Ascending aorta (tissue), 2 donors: ENCODE measurements at regions of chr18 and their contacts with region 1.

Region 1: DNA sequence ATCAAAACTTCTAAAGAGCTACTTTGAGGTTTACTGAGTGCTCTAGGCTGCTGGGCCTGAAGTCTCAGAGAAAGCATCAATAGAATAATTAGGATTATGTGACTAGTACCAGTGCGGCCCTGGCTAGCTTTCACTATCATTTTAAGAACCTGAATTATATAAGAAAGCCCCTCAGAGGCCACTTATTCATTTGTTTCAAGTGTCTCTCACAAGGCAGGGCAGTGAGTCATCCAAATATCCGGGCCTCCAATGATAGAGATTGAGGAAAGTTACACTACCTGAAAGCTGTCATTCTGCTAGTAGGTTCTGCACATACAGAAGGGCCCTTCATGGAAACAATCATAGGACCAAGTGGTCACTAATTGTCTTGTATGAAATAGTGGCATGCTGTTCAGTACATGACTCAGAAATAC is 193.1 kb downstream of the L3MBTL4 start:
- DNase-seq: no peak
- H3K4me3 ChIP-seq: no peak overlapping the region
- H3K27ac ChIP-seq: no peak overlapping the region
- H3K4me1 ChIP-seq: no peaks in the 10 kb centered on the region
- H3K27me3 ChIP-seq: no peaks in the 10 kb centered on the region
- CTCF ChIP-seq: no peak

Region 2: GRCh38 chr18:5975111-5976002 is 246.3 kb before region 1 on chr18:
- intact Hi-C with region 1: no loop called
- DNase-seq: no peak
- H3K4me3 ChIP-seq: no peak overlapping the region
- H3K27ac ChIP-seq: no peak overlapping the region
- H3K4me1 ChIP-seq: no peaks in the 10 kb centered on the region
- H3K27me3 ChIP-seq: no peaks in the 10 kb centered on the region
- CTCF ChIP-seq: no peak

Region 3: GRCh38 chr18:6281874-6282273 is 60.3 kb after region 1 on chr18:
- intact Hi-C with region 1: loop called (anchors 10 kb)
- DNase-seq: no peak
- H3K4me3 ChIP-seq: no peak overlapping the region
- H3K27ac ChIP-seq: no peak overlapping the region
- H3K4me1 ChIP-seq: no peaks in the 10 kb centered on the region
- H3K27me3 ChIP-seq: no peaks in the 10 kb centered on the region
- CTCF ChIP-seq: no peak